Caco-2 (cell line): ENCODE measurements at regions of chr11 and their contacts with region 1.

Region 1: DNA sequence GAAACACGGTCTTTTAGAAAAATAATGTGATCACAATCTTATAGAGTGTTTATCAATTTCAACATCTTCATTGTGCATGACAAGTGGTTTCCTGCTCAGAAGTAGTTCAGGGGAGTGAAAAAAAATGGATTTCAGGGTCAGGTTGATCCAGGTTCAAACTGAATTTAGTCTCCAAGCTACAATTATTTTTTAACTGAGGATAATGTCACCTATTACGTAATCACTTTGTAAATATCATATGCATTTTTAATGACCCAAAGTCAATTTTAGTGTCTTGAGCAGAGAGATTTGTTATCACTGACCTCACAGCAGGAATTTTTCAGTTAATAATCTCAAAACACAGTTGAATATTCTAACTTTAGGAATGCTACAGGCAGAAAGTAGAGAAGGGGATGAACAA is 627.2 kb upstream of the LUZP2 start:
- DNase-seq: no peak
- H3K4me3 ChIP-seq: no peak overlapping the region
- H3K4me3 Mint-ChIP-seq: no peak overlapping the region
- H3K27ac Mint-ChIP-seq: no peak overlapping the region
- H3K4me1 ChIP-seq: peaks cover 16% of the 10 kb centered on the region
- H3K4me1 Mint-ChIP-seq: peaks cover 15% of the 10 kb centered on the region
- H3K27me3 ChIP-seq: no peaks in the 10 kb centered on the region
- H3K27me3 Mint-ChIP-seq: no peaks in the 10 kb centered on the region
- CTCF ChIP-seq: no peak

Region 2: DNA sequence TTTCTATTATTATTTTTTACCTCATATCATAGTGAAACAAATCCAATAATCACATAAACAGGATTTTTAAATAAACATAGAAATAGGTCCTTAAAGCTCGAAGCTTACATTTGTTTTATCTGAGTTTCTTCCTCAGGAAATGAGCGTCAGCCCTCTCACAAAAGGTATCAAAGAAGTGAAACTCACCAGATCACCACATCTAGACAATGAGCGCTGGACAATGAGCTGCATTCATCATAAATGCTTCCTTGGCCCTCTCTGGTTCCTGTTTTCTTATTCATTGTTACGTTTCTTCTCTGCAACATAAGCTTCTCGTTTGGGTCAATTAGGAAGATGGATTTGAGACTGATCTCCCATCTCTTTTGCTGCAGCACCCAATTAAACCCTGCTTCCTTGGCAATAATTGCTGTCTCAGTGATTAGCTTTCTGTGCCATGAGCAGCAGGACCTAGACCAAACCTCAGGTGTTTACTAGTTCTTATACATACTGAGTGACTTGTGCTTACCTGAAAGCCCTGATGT is 22.7 kb before region 1 on chr11:
- CTCF ChIA-PET with region 1: no interaction called
- POLR2A ChIA-PET with region 1: no interaction called
- intact Hi-C with region 1: no loop called
- DNase-seq: no peak
- H3K4me3 ChIP-seq: no peak overlapping the region
- H3K4me3 Mint-ChIP-seq: no peak overlapping the region
- H3K27ac Mint-ChIP-seq: no peak overlapping the region
- H3K4me1 ChIP-seq: no peaks in the 10 kb centered on the region
- H3K4me1 Mint-ChIP-seq: no peaks in the 10 kb centered on the region
- H3K27me3 ChIP-seq: no peaks in the 10 kb centered on the region
- H3K27me3 Mint-ChIP-seq: no peaks in the 10 kb centered on the region
- CTCF ChIP-seq: no peak

Region 3: DNA sequence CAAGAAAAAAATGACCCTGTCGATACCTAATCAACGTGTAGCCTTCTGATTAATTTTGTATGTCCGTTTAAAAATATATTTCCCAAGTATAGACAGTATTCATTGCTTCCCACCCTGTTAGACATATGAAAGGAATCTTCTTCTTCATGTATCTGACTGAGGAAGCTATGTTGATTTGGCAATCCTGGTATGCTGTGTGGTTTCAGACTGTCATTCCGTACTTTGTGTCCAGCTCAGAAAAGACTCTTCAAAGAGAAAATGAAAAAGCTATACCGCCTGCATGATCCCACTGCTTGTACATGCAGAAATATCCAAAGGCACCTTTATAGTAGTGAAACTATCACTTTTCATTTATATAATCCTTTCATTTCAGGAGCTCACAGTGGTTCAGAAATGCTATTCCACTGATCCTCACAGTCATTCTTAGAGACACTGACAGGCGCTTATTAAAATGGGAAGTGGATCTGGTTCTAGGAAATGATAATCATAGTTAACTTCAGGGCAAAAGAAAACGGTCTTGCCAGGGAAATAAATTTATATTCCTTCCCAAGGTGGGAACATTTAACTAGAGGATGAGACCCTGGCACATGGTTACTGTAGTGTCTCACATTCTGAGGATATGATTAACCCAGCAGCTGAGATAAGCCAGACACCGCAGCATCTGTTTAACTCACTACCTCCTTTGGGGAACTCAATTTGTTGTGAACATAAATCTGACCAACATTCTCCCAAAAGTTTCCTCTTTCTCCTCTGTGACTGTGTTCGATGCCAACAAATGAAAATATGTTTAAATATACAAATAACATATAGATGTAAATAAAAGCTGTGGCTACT is 28.0 kb after region 1 on chr11:
- CTCF ChIA-PET with region 1: no interaction called
- POLR2A ChIA-PET with region 1: no interaction called
- intact Hi-C with region 1: loop called (anchors 1 kb)
- DNase-seq: no peak
- H3K4me3 ChIP-seq: no peak overlapping the region
- H3K4me3 Mint-ChIP-seq: no peak overlapping the region
- H3K27ac Mint-ChIP-seq: no peak overlapping the region
- H3K4me1 ChIP-seq: peaks cover 11% of the 10 kb centered on the region
- H3K4me1 Mint-ChIP-seq: peaks cover 8% of the 10 kb centered on the region
- H3K27me3 ChIP-seq: no peaks in the 10 kb centered on the region
- H3K27me3 Mint-ChIP-seq: no peaks in the 10 kb centered on the region
- CTCF ChIP-seq: no peak